SK-N-SH (cell line): ENCODE measurements at regions of chr7 and their contacts with region 1.

Region 1: DNA sequence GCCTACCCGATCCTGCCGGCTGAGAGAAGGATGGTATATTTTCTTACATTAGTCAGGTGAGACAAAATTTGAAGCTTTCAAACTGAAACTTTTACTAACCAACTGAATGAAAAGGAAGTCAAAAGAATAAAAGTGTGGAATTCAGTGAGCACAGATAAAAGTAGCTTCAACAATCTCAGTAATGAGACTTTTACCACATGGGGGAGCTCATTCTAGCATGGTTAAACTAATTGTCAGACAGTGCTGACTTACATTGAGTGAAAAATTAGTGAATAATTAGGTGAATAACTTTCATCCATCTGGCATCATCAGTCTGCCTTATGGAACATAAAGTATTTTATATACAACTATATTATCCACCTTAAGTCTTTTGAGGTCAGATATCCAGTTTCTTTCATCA is 8.4 kb downstream of the FAM237B start:
- DNase-seq: no peak
- H3K4me3 ChIP-seq: no peak overlapping the region
- H3K27ac ChIP-seq: no peak overlapping the region
- H3K4me1 ChIP-seq: no peaks in the 10 kb centered on the region; a peak in 1 of 4 replicates
- H3K27me3 ChIP-seq: no peaks in the 10 kb centered on the region
- CTCF ChIP-seq: peak; percentile 42
- EP300 ChIP-seq: no peak
- RAD21 ChIP-seq: peak; percentile 47

Region 2: GRCh38 chr7:90298145-90299038 is 14.4 kb before region 1 on chr7:
- CTCF ChIA-PET with region 1: interaction called, 11 read pairs
- POLR2A ChIA-PET with region 1: no interaction called
- DNase-seq: peak; percentile 30
- H3K4me3 ChIP-seq: no peak overlapping the region
- H3K27ac ChIP-seq: no peak overlapping the region
- H3K4me1 ChIP-seq: no peaks in the 10 kb centered on the region
- H3K27me3 ChIP-seq: no peaks in the 10 kb centered on the region
- CTCF ChIP-seq: peak; percentile 81
- EP300 ChIP-seq: no peak
- RAD21 ChIP-seq: peak; percentile 72